ENCODE measurements at regions of chr3 and their contacts with region 1.

Region 1: DNA sequence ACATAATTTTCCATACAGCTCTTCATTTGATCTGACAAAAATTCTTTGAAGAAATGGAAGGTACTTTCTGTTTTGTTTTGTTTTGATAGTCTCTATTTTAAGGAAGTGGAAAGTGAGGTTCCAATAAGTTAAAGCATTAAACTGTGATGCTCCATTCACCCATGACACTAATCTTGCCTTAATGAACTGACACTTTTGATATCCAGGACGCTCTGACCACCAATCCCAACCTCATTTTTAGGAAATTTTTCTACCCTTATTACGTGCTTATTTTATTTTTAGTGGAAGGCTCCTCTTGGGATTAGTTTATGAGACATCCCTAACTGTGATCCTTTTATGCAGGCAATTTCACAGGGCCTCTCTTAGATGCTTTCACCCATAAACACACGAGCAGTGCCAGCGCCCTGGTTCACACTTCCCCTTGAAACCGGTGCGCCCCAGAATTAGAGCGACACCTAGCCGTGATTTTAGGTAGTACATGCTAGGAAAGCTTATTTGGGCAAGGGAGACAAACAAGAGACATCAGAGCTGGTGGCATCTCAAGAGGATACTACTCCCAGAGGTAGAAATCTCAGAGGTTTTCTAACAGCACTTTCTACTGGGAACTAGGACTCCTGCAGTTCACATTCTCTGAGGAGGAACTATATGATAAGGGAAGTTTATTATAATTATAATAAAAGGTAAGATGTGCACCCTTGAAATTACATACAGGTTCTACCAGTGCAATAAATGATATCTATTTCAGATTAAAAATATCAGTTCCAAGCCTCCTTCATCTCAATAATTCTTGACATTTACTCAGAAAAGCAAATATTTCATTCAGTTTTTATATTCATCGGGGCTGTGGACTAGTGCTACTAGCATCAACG is 173.9 kb downstream of the SLC9A9 start:
- DNase-seq: peak; percentile 80
- H3K4me3 ChIP-seq: no peak overlapping the region
- H3K27ac ChIP-seq: no peak overlapping the region
- H3K4me1 ChIP-seq: no peaks in the 10 kb centered on the region
- H3K27me3 ChIP-seq: peaks cover 0 to under 1% of the 10 kb centered on the region in 2 experiments
- CTCF ChIP-seq: peak; percentile 76 to 84
- POLR2A ChIP-seq: no peak

Region 2: GRCh38 chr3:142828703-142829305 is 845.5 kb before region 1 on chr3:
- CTCF ChIA-PET with region 1: interaction called, 18 read pairs
- POLR2A ChIA-PET with region 1: no interaction called
- dilution Hi-C with region 1: no loop called
- intact Hi-C with region 1: no loop called
- DNase-seq: peak; percentile 75
- H3K4me3 ChIP-seq: no peak overlapping the region
- H3K27ac ChIP-seq: no peak overlapping the region
- H3K4me1 ChIP-seq: no peaks in the 10 kb centered on the region
- H3K27me3 ChIP-seq: peaks cover 3 to 21% of the 10 kb centered on the region in 2 experiments
- CTCF ChIP-seq: peak; percentile 86
- POLR2A ChIP-seq: no peak

Region 3: DNA sequence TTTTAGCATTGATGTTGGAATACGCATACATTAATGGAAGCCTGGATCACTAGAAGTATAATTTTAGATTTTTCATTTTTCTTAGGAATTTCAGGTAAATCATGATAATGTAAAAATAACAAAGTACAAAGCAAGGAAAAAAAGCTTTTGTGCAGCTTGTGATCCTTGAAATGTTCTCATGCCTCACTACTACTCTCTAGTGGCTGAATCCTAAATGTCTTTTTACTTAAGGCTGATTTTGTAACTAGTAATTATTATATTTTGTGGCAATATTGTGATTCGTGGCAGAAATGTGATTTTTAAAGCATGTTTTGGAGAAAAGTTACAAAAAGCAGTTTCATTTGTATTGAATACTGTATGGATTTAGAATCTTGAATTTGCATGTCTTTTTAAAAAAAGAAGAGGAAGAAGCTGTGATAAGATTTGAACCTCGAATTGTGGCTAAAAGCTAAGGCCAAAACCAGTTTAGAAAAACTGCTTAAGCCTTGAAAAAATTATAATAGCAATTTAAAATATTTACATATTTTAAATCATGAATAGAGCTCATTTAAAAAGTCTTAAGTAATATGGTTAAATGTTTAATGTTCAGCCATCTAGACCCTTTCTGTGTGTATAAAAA is 634.0 kb before region 1 on chr3:
- CTCF ChIA-PET with region 1: interaction called, 29 read pairs
- POLR2A ChIA-PET with region 1: no interaction called
- dilution Hi-C with region 1: no loop called
- intact Hi-C with region 1: loop called (anchors 5 kb)
- DNase-seq: peak; percentile 37
- H3K4me3 ChIP-seq: no peak overlapping the region
- H3K27ac ChIP-seq: no peak overlapping the region
- H3K4me1 ChIP-seq: no peaks in the 10 kb centered on the region
- H3K27me3 ChIP-seq: no peaks in the 10 kb centered on the region
- CTCF ChIP-seq: peak; percentile 26 to 32
- POLR2A ChIP-seq: no peak

Region 4: GRCh38 chr3:143119009-143119914 is 555.1 kb before region 1 on chr3 and contains the start of gene CHST2:
- CTCF ChIA-PET with region 1: interaction called, 31 read pairs
- POLR2A ChIA-PET with region 1: no interaction called
- dilution Hi-C with region 1: no loop called
- intact Hi-C with region 1: loop called (anchors 1 kb)
- DNase-seq: peak; percentile 73
- H3K4me3 ChIP-seq: peak within 1 kb of the TSS; percentile 48 to 94 (median 84)
- H3K27ac ChIP-seq: peak within 1 kb of the TSS; percentile 16
- H3K4me1 ChIP-seq: peaks cover 5% of the 10 kb centered on the region
- H3K27me3 ChIP-seq: peaks cover 0 to under 1% of the 10 kb centered on the region in 2 experiments
- CTCF ChIP-seq: no peak
- POLR2A ChIP-seq: peak; percentile 67
- total RNA-seq, gene CHST2: 2.5 and 6.5 TPM in 2 replicates

Region 5: DNA sequence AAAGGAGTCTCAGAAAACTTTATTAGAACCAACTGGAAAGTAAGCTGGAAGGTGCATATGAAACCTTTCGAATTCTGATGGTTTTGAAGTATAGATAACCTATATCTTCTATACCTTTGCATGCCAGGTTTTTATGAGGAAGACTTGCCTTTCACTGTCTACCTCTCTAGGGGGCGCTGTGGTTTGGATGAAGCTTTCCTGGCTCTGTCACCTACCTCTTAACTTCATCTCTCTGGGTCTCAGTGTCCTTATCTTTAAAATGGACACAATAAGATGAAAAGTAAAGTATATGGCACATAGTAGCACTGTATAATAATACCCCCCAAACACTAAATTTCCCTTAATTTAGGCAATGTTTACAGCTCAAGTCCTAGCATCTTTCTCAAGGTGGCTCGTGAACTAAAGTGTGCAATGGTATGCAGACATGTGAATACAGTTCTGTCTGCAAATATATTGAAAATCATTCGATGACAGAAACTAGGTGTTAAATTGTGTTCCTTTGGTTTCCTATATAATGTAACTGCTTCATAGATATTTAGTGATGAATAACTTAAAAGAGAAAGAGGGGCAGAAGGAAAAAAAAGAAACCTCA is 240.5 kb before region 1 on chr3:
- CTCF ChIA-PET with region 1: interaction called, 7 read pairs
- POLR2A ChIA-PET with region 1: no interaction called
- dilution Hi-C with region 1: no loop called
- intact Hi-C with region 1: loop called (anchors 1 kb)
- DNase-seq: no peak
- H3K4me3 ChIP-seq: no peak overlapping the region
- H3K27ac ChIP-seq: no peak overlapping the region
- H3K4me1 ChIP-seq: no peaks in the 10 kb centered on the region
- H3K27me3 ChIP-seq: no peaks in the 10 kb centered on the region
- CTCF ChIP-seq: peak; percentile 35 to 37
- POLR2A ChIP-seq: no peak

Region 6: DNA sequence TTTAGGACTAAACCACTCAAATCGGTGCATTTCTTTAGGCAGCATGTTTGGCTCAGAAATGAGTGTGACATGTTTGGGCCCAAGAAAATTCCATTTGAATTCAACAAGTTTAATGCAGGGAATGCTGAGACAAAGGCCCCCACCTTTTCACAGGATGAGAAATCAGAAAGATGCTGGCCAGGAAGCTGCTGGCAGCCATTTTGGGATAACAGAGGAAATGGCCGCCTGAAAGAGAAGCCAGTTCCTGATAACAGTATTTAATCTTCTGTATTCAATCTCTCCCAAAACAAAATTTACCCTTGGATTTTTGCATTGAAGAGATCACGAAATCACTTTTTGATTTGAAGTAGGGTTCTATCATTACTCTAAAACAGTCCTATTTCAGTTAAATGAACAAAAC is 177.0 kb before region 1 on chr3:
- CTCF ChIA-PET with region 1: no interaction called
- POLR2A ChIA-PET with region 1: no interaction called
- dilution Hi-C with region 1: no loop called
- intact Hi-C with region 1: no loop called
- DNase-seq: no peak
- H3K4me3 ChIP-seq: no peak overlapping the region
- H3K27ac ChIP-seq: no peak overlapping the region
- H3K4me1 ChIP-seq: no peaks in the 10 kb centered on the region
- H3K27me3 ChIP-seq: no peaks in the 10 kb centered on the region
- CTCF ChIP-seq: no peak
- POLR2A ChIP-seq: no peak

Region 7: GRCh38 chr3:143563786-143564185 is 110.5 kb before region 1 on chr3:
- CTCF ChIA-PET with region 1: no interaction called
- POLR2A ChIA-PET with region 1: no interaction called
- dilution Hi-C with region 1: no loop called
- intact Hi-C with region 1: no loop called
- DNase-seq: no peak
- H3K4me3 ChIP-seq: no peak overlapping the region
- H3K27ac ChIP-seq: no peak overlapping the region
- H3K4me1 ChIP-seq: peaks cover 10% of the 10 kb centered on the region
- H3K27me3 ChIP-seq: no peaks in the 10 kb centered on the region
- CTCF ChIP-seq: no peak
- POLR2A ChIP-seq: no peak

Region 8: GRCh38 chr3:143661677-143662076 is 12.7 kb before region 1 on chr3:
- CTCF ChIA-PET with region 1: interaction called, 38 read pairs
- POLR2A ChIA-PET with region 1: no interaction called
- dilution Hi-C with region 1: no loop called
- intact Hi-C with region 1: no loop called
- DNase-seq: no peak
- H3K4me3 ChIP-seq: no peak overlapping the region
- H3K27ac ChIP-seq: no peak overlapping the region
- H3K4me1 ChIP-seq: no peaks in the 10 kb centered on the region
- H3K27me3 ChIP-seq: peaks cover 0 to 2% of the 10 kb centered on the region in 2 experiments
- CTCF ChIP-seq: no peak
- POLR2A ChIP-seq: no peak

Region 9: DNA sequence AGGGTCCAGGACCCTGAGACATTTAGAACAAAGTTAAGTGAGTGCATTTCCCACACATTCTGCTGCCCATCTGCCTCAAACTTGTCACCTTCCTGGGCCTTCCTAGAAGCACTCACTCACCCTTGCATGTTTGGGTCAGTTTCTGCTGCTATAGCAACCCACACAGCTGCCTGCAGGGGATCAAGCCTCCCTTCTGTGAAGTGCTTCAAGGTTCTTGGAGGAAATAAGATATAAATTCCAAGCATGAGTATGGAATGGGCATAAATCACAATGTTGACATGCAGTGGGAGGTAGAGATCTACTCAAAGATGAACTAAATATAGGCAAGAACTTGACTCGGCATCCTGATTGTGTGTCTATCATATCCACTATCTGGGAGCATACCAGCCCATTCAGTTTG is 33.5 kb after region 1 on chr3:
- CTCF ChIA-PET with region 1: interaction called, 21 read pairs
- POLR2A ChIA-PET with region 1: no interaction called
- dilution Hi-C with region 1: no loop called
- intact Hi-C with region 1: no loop called
- DNase-seq: no peak
- H3K4me3 ChIP-seq: no peak overlapping the region
- H3K27ac ChIP-seq: no peak overlapping the region
- H3K4me1 ChIP-seq: no peaks in the 10 kb centered on the region
- H3K27me3 ChIP-seq: peaks cover 0 to 2% of the 10 kb centered on the region in 2 experiments
- CTCF ChIP-seq: no peak
- POLR2A ChIP-seq: no peak